Activated CD4-positive, alpha-beta T cell treated with anti-CD3 and anti-CD28 coated beads for 36 hours (primary cell): ENCODE measurements at regions of chr15 and their contacts with region 1.

Region 1: GRCh38 chr15:74460871-74461846 is at the start of gene UBL7:
- DNase-seq: peak; percentile 99
- ATAC-seq: peak; percentile 97
- H3K4me3 Mint-ChIP-seq: peak within 1 kb of the TSS; percentile 96
- H3K27ac Mint-ChIP-seq: peak within 1 kb of the TSS; percentile 97
- H3K4me1 Mint-ChIP-seq: peaks cover 47% of the 10 kb centered on the region
- H3K27me3 Mint-ChIP-seq: no peaks in the 10 kb centered on the region
- total RNA-seq, gene UBL7: 47.5 to 48.6 TPM

Region 2: GRCh38 chr15:73991726-73992593 is 469.2 kb before region 1 on chr15 and contains the start of gene STOML1:
- CTCF ChIA-PET with region 1: no interaction called
- POLR2A ChIA-PET with region 1: interaction called, 7 read pairs
- intact Hi-C with region 1: loop called (anchors 1 kb)
- DNase-seq: peak; percentile 96
- ATAC-seq: peak; percentile 74
- H3K4me3 Mint-ChIP-seq: peak within 1 kb of the TSS; percentile 74
- H3K27ac Mint-ChIP-seq: peak within 1 kb of the TSS; percentile 86
- H3K4me1 Mint-ChIP-seq: peaks cover 42% of the 10 kb centered on the region
- H3K27me3 Mint-ChIP-seq: no peaks in the 10 kb centered on the region
- total RNA-seq, gene STOML1: 6.3 to 7.1 TPM

Region 3: DNA sequence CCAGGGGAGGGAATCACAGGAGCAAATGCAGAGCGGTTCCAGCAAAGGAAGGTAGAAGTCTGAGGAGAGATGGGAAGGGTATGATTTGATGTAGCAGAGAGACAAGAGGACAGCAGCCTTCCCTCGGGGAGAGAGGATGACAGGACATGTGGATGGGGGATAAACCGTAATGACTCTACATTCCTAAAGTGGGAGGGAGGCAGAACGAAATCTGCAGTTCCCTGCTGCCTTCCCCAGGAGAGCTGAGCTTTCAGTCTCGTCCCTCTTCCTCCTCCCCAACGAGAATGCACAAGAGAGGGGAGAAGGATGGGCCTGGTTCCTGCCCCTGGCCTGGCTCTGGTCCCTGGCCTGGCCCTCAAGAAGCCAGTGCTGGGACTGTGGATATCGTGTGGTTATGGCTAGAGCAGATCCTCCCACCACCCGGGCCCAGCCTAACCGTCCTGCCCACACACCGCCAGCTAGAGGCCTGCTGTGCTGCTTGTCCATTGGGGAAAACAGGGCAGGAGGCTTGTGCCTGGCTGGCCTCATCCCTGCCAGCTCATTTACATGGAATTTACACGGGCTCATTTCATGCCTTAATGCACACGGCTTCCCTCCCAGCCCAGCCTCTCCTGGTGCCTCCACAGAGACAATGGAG is 54.0 kb before region 1 on chr15:
- CTCF ChIA-PET with region 1: no interaction called
- POLR2A ChIA-PET with region 1: interaction called, 3 read pairs
- intact Hi-C with region 1: loop called in 1 of 2 experiments (anchors 1 kb)
- DNase-seq: no peak
- ATAC-seq: no peak
- H3K4me3 Mint-ChIP-seq: no peak overlapping the region
- H3K27ac Mint-ChIP-seq: no peak overlapping the region
- H3K4me1 Mint-ChIP-seq: peaks cover 29% of the 10 kb centered on the region
- H3K27me3 Mint-ChIP-seq: no peaks in the 10 kb centered on the region

Region 4: GRCh38 chr15:74489518-74490338 is 28.6 kb after region 1 on chr15:
- CTCF ChIA-PET with region 1: interaction called, 4 read pairs
- POLR2A ChIA-PET with region 1: interaction called, 3 read pairs
- intact Hi-C with region 1: loop called in 1 of 2 experiments (anchors 1 kb)
- DNase-seq: peak; percentile 85
- ATAC-seq: peak; percentile 92
- H3K4me3 Mint-ChIP-seq: no peak overlapping the region
- H3K27ac Mint-ChIP-seq: no peak overlapping the region
- H3K4me1 Mint-ChIP-seq: peaks cover 12% of the 10 kb centered on the region
- H3K27me3 Mint-ChIP-seq: no peaks in the 10 kb centered on the region

Region 5: GRCh38 chr15:74598126-74598842 is 137.1 kb after region 1 on chr15:
- CTCF ChIA-PET with region 1: no interaction called
- POLR2A ChIA-PET with region 1: interaction called, 4 read pairs
- intact Hi-C with region 1: loop called in 1 of 2 experiments (anchors 1 kb)
- DNase-seq: peak; percentile 94
- ATAC-seq: peak; percentile 99
- H3K4me3 Mint-ChIP-seq: peak overlapping the region; percentile 90
- H3K27ac Mint-ChIP-seq: peak overlapping the region; percentile 99
- H3K4me1 Mint-ChIP-seq: peaks cover 20% of the 10 kb centered on the region
- H3K27me3 Mint-ChIP-seq: no peaks in the 10 kb centered on the region

Region 6: DNA sequence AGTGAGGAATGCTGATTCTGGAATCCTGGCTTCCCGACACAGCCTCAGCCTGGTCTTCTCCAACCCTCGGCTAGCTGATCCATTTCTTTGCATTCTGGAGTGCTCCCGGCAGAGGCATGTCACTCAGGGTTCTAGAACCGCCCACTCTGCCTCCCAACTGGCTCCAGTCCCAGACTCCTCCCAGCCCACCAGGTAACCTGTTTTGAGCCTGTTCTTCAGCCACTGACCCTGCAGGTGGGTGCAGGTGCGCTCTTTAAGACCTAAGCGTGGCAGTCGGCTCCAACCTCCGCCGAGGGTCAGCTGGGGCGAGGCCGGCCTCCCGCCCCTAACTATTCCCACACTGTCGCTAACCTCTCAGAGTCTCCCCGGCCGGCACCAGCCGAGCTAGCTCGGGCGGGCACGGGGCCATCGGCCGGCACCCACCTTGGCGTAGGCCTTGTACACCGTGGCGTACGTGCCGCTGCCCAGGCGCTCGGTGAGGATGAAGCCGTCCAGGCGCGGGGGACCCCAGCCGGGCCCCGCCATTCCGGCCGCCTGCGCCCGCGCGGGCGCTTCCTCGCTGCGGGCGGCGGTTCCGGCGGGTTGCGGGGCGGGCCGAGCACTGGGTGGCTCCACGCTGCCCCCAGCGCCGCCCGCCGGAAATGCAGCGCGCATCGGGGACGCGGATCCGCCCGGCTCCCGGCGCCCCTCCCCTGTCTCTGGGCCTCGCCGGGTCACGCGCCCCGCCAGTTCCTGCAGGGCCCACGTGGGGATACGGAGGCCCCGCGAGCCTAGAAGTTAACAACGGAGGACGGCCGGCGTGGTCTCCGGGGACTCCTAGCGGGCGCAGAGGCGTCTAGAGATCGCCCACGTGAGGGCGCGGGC is 381.7 kb after region 1 on chr15 and contains the start of gene ULK3:
- CTCF ChIA-PET with region 1: no interaction called
- POLR2A ChIA-PET with region 1: no interaction called
- intact Hi-C with region 1: loop called in 1 of 2 experiments (anchors 1 kb)
- DNase-seq: peak; percentile 97
- ATAC-seq: peak; percentile 85
- H3K4me3 Mint-ChIP-seq: peak within 1 kb of the TSS; percentile 90
- H3K27ac Mint-ChIP-seq: peak within 1 kb of the TSS; percentile 90
- H3K4me1 Mint-ChIP-seq: peaks cover 45% of the 10 kb centered on the region
- H3K27me3 Mint-ChIP-seq: no peaks in the 10 kb centered on the region
- total RNA-seq, gene ULK3: 40.3 to 45.2 TPM